H1 (cell line): ENCODE measurements at regions of chr2 and their contacts with region 1.

Region 1: GRCh38 chr2:73253901-73254300 is 19.8 kb downstream of the CCT7 start:
- DNase-seq: no peak
- H3K4me3 ChIP-seq: no peak overlapping the region
- H3K27ac ChIP-seq: no peak overlapping the region
- H3K4me1 ChIP-seq: peaks cover 0 to 7% (median 1%) of the 10 kb centered on the region in 4 experiments; a peak in 2 of 7 replicates
- H3K27me3 ChIP-seq: no peaks in the 10 kb centered on the region
- CTCF ChIP-seq: no peak
- EP300 ChIP-seq: no peak
- POLR2A ChIP-seq: peak in 1 of 2 experiments; percentile 43; a peak in 2 of 3 replicates
- RAD21 ChIP-seq: no peak

Region 2: DNA sequence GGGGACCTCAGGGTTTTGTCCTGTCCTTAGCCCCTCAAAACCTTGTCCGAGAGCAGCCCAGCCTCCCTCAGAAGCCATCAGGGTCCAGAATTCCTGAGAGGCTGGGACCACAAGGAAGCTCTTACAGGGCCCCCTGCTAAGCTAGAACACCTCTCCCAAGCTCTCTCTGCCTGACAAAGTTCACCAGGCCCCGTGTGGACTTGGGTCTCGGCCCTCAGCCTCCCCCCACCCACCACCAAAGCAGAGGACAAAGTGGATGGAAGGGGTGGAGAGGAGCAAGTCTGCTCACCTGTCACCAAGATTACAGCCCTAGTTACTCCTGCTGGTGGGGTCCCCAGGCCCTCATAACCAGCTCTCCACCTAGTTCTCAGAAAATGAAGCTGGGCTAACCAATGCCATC is 158.0 kb before region 1 on chr2:
- CTCF ChIA-PET with region 1: no interaction called
- POLR2A ChIA-PET with region 1: no interaction called
- DNase-seq: no peak
- H3K4me3 ChIP-seq: no peak overlapping the region
- H3K27ac ChIP-seq: no peak overlapping the region
- H3K4me1 ChIP-seq: no peaks in the 10 kb centered on the region; a peak in 1 of 7 replicates
- H3K27me3 ChIP-seq: no peaks in the 10 kb centered on the region
- CTCF ChIP-seq: no peak
- EP300 ChIP-seq: no peak
- POLR2A ChIP-seq: no peak
- RAD21 ChIP-seq: no peak

Region 3: GRCh38 chr2:73233154-73233931 is 20.6 kb before region 1 on chr2 and contains the start of gene PRADC1:
- CTCF ChIA-PET with region 1: interaction called, 51 read pairs
- POLR2A ChIA-PET with region 1: interaction called, 105 read pairs
- DNase-seq: peak; percentile 94 to 98
- H3K4me3 ChIP-seq: peak within 1 kb of the TSS; percentile 82 to 93 (median 88)
- H3K27ac ChIP-seq: peak within 1 kb of the TSS; percentile 30; the same call in 1 of the 2 replicates
- H3K4me1 ChIP-seq: peaks cover 10 to 16% (median 13%) of the 10 kb centered on the region in 4 experiments; a peak in 6 of 7 replicates
- H3K27me3 ChIP-seq: no peaks in the 10 kb centered on the region; a peak in 2 of 7 replicates
- CTCF ChIP-seq: no peak
- EP300 ChIP-seq: no peak
- POLR2A ChIP-seq: no peak
- RAD21 ChIP-seq: no peak
- total RNA-seq, gene PRADC1: 7.5 and 8.9 TPM in 2 replicates

Region 4: GRCh38 chr2:73268830-73269685 is 15.2 kb after region 1 on chr2:
- CTCF ChIA-PET with region 1: interaction called, 15 read pairs
- POLR2A ChIA-PET with region 1: interaction called, 22 read pairs
- DNase-seq: peak; percentile 51 to 85
- H3K4me3 ChIP-seq: peak overlapping the region; percentile 39 to 63 (median 54)
- H3K27ac ChIP-seq: peak overlapping the region; percentile 21; the same call in 1 of the 2 replicates
- H3K4me1 ChIP-seq: peaks cover 0 to 10% (median 6%) of the 10 kb centered on the region in 4 experiments; a peak in 5 of 7 replicates
- H3K27me3 ChIP-seq: peaks cover 0 to 28% (median 23%) of the 10 kb centered on the region in 4 experiments; a peak in 6 of 7 replicates
- CTCF ChIP-seq: peak in 2 of 3 experiments; percentile 10 to 12; a peak in 2 of 4 replicates
- EP300 ChIP-seq: peak in 1 of 2 experiments; percentile 84; a peak in 1 of 3 replicates
- POLR2A ChIP-seq: no peak
- RAD21 ChIP-seq: no peak